HEK293T (cell line): ENCODE measurements at regions of chr2 and their contacts with region 1.

Region 1: GRCh38 chr2:174039551-174040416 is 74.6 kb upstream of the SP3 start:
- DNase-seq: peak; percentile 78

Region 2: DNA sequence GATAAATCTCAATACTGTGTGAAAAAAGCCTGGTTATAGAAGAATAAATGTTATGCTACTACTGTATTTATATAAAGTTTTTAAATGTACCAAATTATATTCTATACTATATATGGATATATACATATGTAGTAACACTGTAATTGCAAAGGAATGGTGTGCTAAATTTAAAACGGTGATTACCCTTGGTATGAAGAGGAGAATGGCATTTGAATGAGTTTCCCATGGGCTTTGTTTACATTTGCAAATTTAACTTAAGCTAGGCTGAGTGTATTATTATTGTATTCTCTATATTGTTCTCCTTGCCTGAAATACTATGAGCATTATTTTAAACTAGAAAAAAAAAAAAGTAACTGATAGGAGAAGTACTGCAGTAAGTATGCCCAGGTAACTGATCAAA is 69.9 kb before region 1 on chr2:
- CTCF ChIA-PET with region 1: interaction called, 10 read pairs
- POLR2A ChIA-PET with region 1: interaction called, 3 read pairs
- DNase-seq: no peak

Region 3: DNA sequence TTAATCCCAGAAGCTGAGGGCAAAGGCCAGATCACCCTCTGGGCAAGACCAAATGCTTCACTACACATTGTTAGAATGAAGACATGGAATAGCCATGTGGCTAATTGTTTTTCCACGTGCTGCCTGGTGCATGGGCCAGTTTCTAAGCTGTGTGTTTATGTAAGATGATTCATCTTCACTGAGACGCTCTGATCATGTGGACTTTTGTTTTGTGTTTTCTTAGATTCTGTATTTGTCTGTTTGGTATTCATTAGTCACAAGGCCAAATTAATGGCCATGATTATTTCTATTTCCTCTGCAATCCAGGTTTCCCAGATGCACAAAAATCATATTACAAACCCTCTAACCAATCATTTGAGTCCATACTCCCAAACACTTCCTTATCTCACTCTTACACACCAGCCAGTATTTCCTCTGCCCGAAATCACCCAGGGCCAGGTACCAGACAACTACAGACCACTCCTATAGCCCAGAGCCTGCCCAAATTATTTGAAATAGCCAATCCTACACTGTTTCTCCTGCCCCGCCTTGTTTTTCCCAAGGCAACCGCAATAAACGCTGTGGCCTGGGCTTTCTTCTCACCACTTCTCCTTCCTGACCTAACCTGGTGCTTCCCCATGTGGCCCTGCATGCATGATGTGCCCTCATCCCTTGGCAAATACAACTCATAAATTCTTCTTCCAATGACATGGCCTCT is 19.5 kb after region 1 on chr2:
- CTCF ChIA-PET with region 1: no interaction called
- POLR2A ChIA-PET with region 1: no interaction called
- DNase-seq: no peak

Region 4: GRCh38 chr2:174112073-174112472 is 72.3 kb after region 1 on chr2:
- CTCF ChIA-PET with region 1: interaction called, 12 read pairs
- POLR2A ChIA-PET with region 1: no interaction called
- DNase-seq: no peak